ENCODE measurements at regions of chr7 and their contacts with region 1.

Region 1: GRCh38 chr7:73865738-73866445 is 4.9 kb downstream of the TMEM270 start:
- DNase-seq: peak; percentile 43
- H3K4me3 Mint-ChIP-seq: no peak overlapping the region
- H3K27ac Mint-ChIP-seq: no peak overlapping the region
- H3K4me1 Mint-ChIP-seq: no peaks in the 10 kb centered on the region
- H3K27me3 Mint-ChIP-seq: no peaks in the 10 kb centered on the region
- CTCF ChIP-seq: no peak

Region 2: GRCh38 chr7:73652541-73652949 is 213.3 kb before region 1 on chr7:
- CTCF ChIA-PET with region 1: no interaction called
- intact Hi-C with region 1: no loop called
- DNase-seq: peak; percentile 50
- H3K4me3 Mint-ChIP-seq: no peak overlapping the region
- H3K27ac Mint-ChIP-seq: peak overlapping the region; percentile 70
- H3K4me1 Mint-ChIP-seq: peaks cover 8% of the 10 kb centered on the region
- H3K27me3 Mint-ChIP-seq: peaks cover 37% of the 10 kb centered on the region
- CTCF ChIP-seq: no peak

Region 3: GRCh38 chr7:73792594-73793292 is 73.1 kb before region 1 on chr7:
- CTCF ChIA-PET with region 1: no interaction called
- intact Hi-C with region 1: no loop called
- DNase-seq: peak; percentile 33
- H3K4me3 Mint-ChIP-seq: no peak overlapping the region
- H3K27ac Mint-ChIP-seq: no peak overlapping the region
- H3K4me1 Mint-ChIP-seq: peaks cover 8% of the 10 kb centered on the region
- H3K27me3 Mint-ChIP-seq: no peaks in the 10 kb centered on the region
- CTCF ChIP-seq: no peak

Region 4: DNA sequence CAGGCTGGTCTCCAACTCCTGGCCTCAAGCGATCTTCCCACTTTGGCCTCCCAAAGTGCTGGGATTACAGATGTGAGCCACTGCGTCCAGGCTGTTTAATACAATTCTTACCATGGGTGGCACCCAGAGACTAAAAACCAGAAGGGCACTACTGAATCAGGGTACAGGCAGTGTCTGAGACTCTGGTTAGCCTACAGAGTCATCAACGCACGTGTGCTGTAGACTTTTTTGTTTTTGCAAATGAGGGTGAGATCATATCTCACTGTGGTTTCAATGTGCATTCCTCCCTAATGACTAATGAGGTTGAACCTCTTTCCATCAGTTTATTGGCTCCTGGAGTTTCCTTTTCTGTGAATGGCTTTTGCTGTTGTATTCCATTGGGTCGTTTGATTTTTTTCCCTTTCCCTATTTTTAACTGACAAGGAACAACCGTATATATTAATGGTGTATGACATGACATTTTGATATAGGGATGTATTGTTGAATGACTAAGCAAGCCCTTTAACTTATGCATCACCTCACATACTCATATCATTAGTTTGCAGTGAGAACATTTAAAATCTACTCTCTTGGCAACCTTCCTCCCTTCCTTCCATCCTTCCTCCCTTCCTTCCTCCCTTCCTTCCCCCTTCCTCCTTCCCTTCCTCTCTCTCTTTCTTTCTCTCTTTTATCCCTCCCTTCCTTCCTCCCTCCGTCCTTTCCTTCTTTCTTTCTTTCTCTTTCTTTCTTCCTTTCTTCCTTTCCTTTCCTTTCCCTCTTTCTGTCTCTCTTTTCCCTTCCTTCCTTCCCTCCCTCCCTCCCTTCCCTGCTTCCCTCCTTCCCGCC is 14.3 kb before region 1 on chr7:
- CTCF ChIA-PET with region 1: no interaction called
- intact Hi-C with region 1: no loop called
- DNase-seq: peak; percentile 51
- H3K4me3 Mint-ChIP-seq: no peak overlapping the region
- H3K27ac Mint-ChIP-seq: peak overlapping the region; percentile 95
- H3K4me1 Mint-ChIP-seq: peaks cover 30% of the 10 kb centered on the region
- H3K27me3 Mint-ChIP-seq: no peaks in the 10 kb centered on the region
- CTCF ChIP-seq: no peak

Region 5: GRCh38 chr7:73978661-73979563 is 113.0 kb after region 1 on chr7:
- CTCF ChIA-PET with region 1: interaction called, 6 read pairs
- intact Hi-C with region 1: loop called (anchors 2 kb)
- DNase-seq: peak; percentile 83
- H3K4me3 Mint-ChIP-seq: no peak overlapping the region
- H3K27ac Mint-ChIP-seq: no peak overlapping the region
- H3K4me1 Mint-ChIP-seq: no peaks in the 10 kb centered on the region
- H3K27me3 Mint-ChIP-seq: no peaks in the 10 kb centered on the region
- CTCF ChIP-seq: peak; percentile 47

Region 6: GRCh38 chr7:74026903-74027551 is 161.1 kb after region 1 on chr7:
- CTCF ChIA-PET with region 1: interaction called, 3 read pairs
- intact Hi-C with region 1: loop called (anchors 5 kb)
- DNase-seq: peak; percentile 70
- H3K4me3 Mint-ChIP-seq: no peak overlapping the region
- H3K27ac Mint-ChIP-seq: no peak overlapping the region
- H3K4me1 Mint-ChIP-seq: peaks cover 7% of the 10 kb centered on the region
- H3K27me3 Mint-ChIP-seq: peaks cover 68% of the 10 kb centered on the region
- CTCF ChIP-seq: peak; percentile 78

Region 7: GRCh38 chr7:74083117-74083876 is 217.4 kb after region 1 on chr7 and contains the start of gene LIMK1:
- CTCF ChIA-PET with region 1: no interaction called
- intact Hi-C with region 1: no loop called
- DNase-seq: peak; percentile 80
- H3K4me3 Mint-ChIP-seq: peak within 1 kb of the TSS; percentile 86
- H3K27ac Mint-ChIP-seq: peak within 1 kb of the TSS; percentile 66
- H3K4me1 Mint-ChIP-seq: no peaks in the 10 kb centered on the region
- H3K27me3 Mint-ChIP-seq: no peaks in the 10 kb centered on the region
- CTCF ChIP-seq: no peak
- total RNA-seq, gene LIMK1: 32.2 and 34.4 TPM in 2 replicates

Measured in Calu3 (cell line).